ENCODE measurements at regions of chr1 and their contacts with region 1.

Region 1: GRCh38 chr1:35762141-35762540 is 7.6 kb downstream of the CLSPN start:
- DNase-seq: no peak
- H3K4me3 Mint-ChIP-seq: no peak overlapping the region
- H3K27ac Mint-ChIP-seq: no peak overlapping the region
- H3K4me1 Mint-ChIP-seq: peaks cover 7% of the 10 kb centered on the region
- H3K27me3 Mint-ChIP-seq: no peaks in the 10 kb centered on the region

Region 2: DNA sequence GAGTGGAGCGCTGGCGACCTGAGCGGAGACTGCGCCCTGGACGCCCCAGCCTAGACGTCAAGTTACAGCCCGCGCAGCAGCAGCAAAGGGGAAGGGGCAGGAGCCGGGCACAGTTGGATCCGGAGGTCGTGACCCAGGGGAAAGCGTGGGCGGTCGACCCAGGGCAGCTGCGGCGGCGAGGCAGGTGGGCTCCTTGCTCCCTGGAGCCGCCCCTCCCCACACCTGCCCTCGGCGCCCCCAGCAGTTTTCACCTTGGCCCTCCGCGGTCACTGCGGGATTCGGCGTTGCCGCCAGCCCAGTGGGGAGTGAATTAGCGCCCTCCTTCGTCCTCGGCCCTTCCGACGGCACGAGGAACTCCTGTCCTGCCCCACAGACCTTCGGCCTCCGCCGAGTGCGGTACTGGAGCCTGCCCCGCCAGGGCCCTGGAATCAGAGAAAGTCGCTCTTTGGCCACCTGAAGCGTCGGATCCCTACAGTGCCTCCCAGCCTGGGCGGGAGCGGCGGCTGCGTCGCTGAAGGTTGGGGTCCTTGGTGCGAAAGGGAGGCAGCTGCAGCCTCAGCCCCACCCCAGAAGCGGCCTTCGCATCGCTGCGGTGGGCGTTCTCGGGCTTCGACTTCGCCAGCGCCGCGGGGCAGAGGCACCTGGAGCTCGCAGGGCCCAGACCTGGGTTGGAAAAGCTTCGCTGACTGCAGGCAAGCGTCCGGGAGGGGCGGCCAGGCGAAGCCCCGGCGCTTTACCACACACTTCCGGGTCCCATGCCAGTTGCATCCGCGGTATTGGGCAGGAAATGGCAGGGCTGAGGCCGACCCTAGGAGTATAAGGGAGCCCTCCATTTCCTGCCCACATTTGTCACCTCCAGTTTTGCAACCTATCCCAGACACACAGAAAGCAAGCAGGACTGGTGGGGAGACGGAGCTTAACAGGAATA is 184.8 kb before region 1 on chr1:
- CTCF ChIA-PET with region 1: no interaction called
- intact Hi-C with region 1: no loop called
- DNase-seq: peak; percentile 76
- H3K4me3 Mint-ChIP-seq: peak overlapping the region; percentile 69
- H3K27ac Mint-ChIP-seq: peak overlapping the region; percentile 13
- H3K4me1 Mint-ChIP-seq: peaks cover 18% of the 10 kb centered on the region
- H3K27me3 Mint-ChIP-seq: peaks cover 20% of the 10 kb centered on the region

Region 3: GRCh38 chr1:35783055-35783583 is 21.0 kb after region 1 on chr1:
- CTCF ChIA-PET with region 1: no interaction called
- intact Hi-C with region 1: loop called (anchors 1 kb)
- DNase-seq: no peak
- H3K4me3 Mint-ChIP-seq: no peak overlapping the region
- H3K27ac Mint-ChIP-seq: no peak overlapping the region
- H3K4me1 Mint-ChIP-seq: no peaks in the 10 kb centered on the region
- H3K27me3 Mint-ChIP-seq: no peaks in the 10 kb centered on the region

Region 4: GRCh38 chr1:35808450-35809113 is 46.4 kb after region 1 on chr1:
- CTCF ChIA-PET with region 1: no interaction called
- intact Hi-C with region 1: no loop called
- DNase-seq: peak; percentile 48
- H3K4me3 Mint-ChIP-seq: peak overlapping the region; percentile 76
- H3K27ac Mint-ChIP-seq: no peak overlapping the region
- H3K4me1 Mint-ChIP-seq: peaks cover 35% of the 10 kb centered on the region
- H3K27me3 Mint-ChIP-seq: no peaks in the 10 kb centered on the region

Measured in activated naive CD4-positive, alpha-beta T cell treated with anti-CD3 and anti-CD28 coated beads for 36 hours (primary cell).